Breast epithelium (tissue), 4 donors: ENCODE measurements at regions of chr16 and their contacts with region 1.

Region 1: GRCh38 chr16:48632137-48632774 is 22.3 kb upstream of the N4BP1 start:
- DNase-seq: no peak
- H3K4me3 ChIP-seq: no peak overlapping the region
- H3K27ac ChIP-seq: no peak overlapping the region
- H3K4me1 ChIP-seq: no peaks in the 10 kb centered on the region
- H3K27me3 ChIP-seq: no peaks in the 10 kb centered on the region
- CTCF ChIP-seq: no peak
- POLR2A ChIP-seq: no peak

Region 2: DNA sequence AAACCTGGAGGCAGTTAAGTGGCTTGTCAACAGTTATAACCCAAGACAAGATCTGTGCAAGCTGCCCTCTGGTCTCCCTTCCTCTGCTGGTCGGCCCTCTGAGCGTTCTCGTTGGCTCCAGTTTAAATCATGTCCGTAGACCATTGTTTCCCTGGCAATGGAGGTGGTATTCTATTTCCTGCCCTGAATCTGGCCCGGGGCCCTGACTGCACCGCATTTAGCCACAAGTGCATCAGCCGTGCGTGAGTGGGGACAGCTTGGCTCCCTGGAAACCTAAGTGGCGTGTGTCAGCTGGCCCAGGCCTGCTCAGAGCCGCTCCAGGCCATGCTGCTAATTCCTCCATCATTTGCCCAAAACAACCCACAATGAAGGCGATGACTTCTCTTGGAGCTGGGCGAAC is 1869.1 kb before region 1 on chr16:
- intact Hi-C with region 1: no loop called
- DNase-seq: no peak
- H3K4me3 ChIP-seq: no peak overlapping the region
- H3K27ac ChIP-seq: no peak overlapping the region
- H3K4me1 ChIP-seq: no peaks in the 10 kb centered on the region
- H3K27me3 ChIP-seq: peaks cover 0 to 11% of the 10 kb centered on the region in 2 donors
- CTCF ChIP-seq: no peak
- POLR2A ChIP-seq: no peak

Region 3: DNA sequence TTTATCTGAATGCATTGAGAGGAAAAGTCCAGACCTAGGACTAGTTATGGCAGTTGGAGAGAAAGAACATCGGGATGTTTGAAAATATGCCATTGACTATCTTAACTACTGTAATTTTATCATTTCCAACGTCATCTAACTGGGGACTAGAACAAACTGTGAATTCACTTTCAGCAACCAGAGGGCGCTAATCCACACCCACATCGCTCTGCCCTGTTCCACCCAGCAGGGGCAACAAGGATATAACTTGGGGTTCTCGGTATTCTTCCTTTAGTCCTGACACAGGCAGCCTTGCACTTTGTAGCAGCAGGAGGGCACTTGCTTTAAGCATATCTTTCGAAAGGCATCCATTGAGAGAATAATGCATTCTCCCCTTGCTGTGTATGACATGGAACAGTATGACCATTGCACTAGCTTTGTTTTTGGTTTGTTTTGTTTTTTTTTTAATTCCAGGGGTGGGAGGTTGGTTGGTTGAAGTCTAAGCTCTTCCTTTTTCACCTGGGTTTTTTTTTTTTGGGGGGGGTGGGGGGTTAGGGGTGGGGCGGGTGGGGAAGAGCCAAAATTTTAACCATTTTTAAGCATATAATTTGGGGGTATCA is 278.6 kb before region 1 on chr16:
- intact Hi-C with region 1: loop called (anchors 10 kb)
- DNase-seq: no peak
- H3K4me3 ChIP-seq: no peak overlapping the region
- H3K27ac ChIP-seq: no peak overlapping the region
- H3K4me1 ChIP-seq: no peaks in the 10 kb centered on the region
- H3K27me3 ChIP-seq: no peaks in the 10 kb centered on the region
- CTCF ChIP-seq: peak; percentile 67 to 91 (median 88)
- POLR2A ChIP-seq: no peak